ENCODE measurements at regions of chr18 and their contacts with region 1.

Region 1: DNA sequence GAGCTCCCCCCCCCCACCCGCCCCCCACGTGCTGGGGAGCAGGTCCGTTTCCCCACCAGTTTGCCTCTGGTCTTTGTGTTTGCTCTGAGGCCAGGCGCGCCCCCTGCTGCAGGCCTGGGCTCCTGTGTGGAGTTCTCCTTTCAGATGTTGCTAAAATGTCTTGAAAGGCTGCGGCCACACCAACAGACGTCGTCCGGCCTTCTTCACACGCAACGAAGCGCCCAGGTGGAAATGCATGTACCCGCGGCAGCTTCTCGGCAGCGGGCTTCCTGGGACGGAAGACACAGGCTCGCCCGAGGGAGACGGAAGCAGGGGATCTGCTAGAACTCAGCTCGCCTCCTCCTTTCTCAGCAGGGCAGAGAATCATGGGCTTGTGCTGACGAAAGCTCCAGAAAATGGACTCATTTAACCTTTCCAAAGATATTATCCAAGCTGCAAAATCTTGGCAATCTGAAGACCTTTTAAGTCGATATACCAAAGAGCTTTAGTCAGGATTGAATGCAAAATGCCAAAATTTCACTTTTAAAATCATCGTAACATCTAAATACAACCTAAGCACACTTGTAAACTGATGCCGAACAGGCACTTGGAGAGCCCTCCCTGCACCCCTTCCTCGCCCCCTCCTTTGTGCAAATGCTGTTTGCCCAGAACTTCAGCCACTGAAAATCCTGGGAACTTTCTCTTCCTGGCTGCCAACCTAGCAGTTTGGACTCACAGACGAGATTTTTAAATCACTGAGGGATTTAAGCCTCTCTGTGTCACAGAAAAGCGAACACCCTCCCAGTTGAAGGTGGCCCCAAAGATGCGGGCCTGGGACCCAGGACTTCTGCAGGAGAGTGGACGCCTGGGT is 125.5 kb upstream of the ZNF516 start:
- DNase-seq: no peak
- H3K4me3 ChIP-seq: peak overlapping the region; percentile 25; the same call in 1 of the 2 replicates
- H3K27me3 ChIP-seq: no peaks in the 10 kb centered on the region; the same call in 1 of the 2 replicates
- CTCF ChIP-seq: peak; percentile 85

Region 2: DNA sequence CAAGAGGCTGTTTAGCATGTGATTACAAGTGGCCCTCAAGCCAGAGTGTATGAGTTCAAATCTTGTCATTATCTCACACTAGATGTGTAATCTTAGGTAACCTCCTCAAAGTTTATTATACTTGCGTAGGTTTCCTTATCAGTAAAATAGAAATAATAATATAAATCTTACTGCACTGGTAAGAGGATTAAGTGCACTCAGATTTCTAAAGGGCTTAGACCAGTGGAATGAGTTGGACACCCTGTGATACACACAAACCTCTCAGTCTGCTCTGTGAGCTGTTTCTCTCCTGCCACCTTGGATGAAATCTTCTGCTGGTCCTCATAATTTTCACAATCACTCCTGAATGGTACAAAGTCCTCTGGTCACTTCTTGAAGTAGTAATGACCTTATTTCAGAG is 19.9 kb after region 1 on chr18:
- CTCF ChIA-PET with region 1: interaction called, 12 read pairs
- POLR2A ChIA-PET with region 1: no interaction called
- DNase-seq: no peak
- H3K4me3 ChIP-seq: no peak overlapping the region
- H3K27me3 ChIP-seq: peaks cover 2% of the 10 kb centered on the region; the same call in 1 of the 2 replicates
- CTCF ChIP-seq: no peak

Region 3: GRCh38 chr18:76765649-76766048 is 145.1 kb after region 1 on chr18:
- CTCF ChIA-PET with region 1: no interaction called
- POLR2A ChIA-PET with region 1: no interaction called
- DNase-seq: no peak
- H3K4me3 ChIP-seq: no peak overlapping the region
- H3K27me3 ChIP-seq: no peaks in the 10 kb centered on the region; the same call in 1 of the 2 replicates
- CTCF ChIP-seq: no peak

Measured in BJ (cell line).